Left ventricle myocardium superior (tissue), 1 donor: ENCODE measurements at regions of chr9 and their contacts with region 1.

Region 1: GRCh38 chr9:101530077-101530711 is 3.5 kb upstream of the RNF20 start:
- DNase-seq: peak; percentile 48
- ATAC-seq: peak; percentile 40

Region 2: GRCh38 chr9:101315129-101315459 is 215.1 kb before region 1 on chr9:
- intact Hi-C with region 1: no loop called
- DNase-seq: no peak
- ATAC-seq: no peak

Region 3: DNA sequence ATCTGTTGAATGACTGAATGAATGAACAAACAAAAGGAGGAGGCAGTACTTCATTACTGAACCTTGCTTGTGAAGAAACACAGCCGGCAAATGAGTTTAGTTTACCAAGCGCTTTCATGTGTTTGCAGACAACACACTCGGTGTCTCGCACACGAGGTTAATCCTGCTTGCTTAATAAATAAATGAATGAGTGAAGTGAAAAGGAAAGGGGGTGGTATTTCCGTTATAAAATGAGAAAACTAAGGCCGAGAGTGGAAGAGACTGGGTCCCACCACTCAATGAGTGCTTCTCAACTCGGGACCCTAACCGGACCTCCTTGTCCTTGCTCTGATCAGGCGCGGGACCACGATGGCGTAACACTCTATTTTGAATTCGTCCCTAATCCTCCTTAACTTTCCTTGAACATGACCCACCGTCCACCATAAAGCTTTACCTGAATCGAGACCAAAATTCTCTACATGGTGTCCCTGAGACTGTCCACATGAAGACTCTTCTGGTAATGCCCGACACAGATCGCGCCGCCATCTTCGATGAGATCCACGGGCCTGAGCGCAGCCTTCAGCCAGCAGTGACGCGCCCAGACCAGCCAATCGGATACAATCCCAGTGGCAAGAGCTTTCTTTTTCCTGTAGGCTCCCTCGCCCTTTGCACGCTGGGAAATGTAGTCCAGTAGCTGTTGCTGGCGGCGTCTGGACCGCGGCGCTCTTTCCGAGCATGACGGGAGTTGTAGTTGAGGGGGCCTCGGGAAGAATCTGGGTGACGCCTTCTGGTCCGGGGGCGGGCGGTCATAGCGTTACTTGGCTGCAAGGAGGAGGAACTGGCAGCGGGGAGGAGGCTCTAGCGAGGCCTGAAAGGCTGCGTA is 131.9 kb before region 1 on chr9 and contains the starts of genes MRPL50 and ZNF189:
- intact Hi-C with region 1: loop called (anchors 5 kb)
- DNase-seq: peak; percentile 97
- ATAC-seq: peak; percentile 97
- total RNA-seq, gene MRPL50: 18.2 TPM
- total RNA-seq, gene ZNF189: 17.5 TPM

Region 4: DNA sequence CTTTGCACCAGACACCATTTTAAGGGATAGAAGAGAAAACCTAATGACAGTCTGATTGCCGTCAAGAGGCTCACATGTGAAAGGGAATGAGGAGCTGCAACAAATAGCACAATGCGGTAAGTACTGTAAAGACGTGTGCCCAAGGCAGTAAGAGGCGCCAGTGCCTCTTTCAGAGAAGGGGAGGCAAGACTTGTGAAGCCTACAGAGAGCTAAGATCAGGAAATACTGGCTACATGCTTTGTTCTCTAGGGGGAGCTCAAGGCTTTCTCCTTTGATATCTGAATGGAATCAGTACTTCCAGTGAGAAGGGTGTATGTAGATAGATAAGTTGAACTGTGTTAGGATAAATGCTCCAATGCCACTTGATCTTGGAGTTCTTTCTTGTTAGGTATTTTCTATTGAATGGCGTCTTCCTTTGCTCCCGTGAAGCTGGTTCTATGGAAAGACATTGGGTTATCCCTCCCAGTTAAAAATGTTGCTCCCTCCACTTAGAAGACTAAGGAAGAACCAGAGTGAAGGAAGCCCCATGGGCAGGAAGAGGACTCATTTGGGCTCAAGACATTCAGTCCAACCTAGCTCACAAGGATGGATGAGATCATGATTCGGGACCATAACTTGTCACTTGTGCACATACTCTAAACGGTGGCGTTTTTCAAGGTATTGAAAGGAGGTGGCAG is 71.1 kb before region 1 on chr9:
- intact Hi-C with region 1: loop called (anchors 5 kb)
- DNase-seq: no peak
- ATAC-seq: peak; percentile 77

Region 5: GRCh38 chr9:101727612-101728524 is 197.7 kb after region 1 on chr9:
- intact Hi-C with region 1: no loop called
- DNase-seq: no peak
- ATAC-seq: no peak